PC-9 (cell line): ENCODE measurements at regions of chr12 and their contacts with region 1.

Region 1: DNA sequence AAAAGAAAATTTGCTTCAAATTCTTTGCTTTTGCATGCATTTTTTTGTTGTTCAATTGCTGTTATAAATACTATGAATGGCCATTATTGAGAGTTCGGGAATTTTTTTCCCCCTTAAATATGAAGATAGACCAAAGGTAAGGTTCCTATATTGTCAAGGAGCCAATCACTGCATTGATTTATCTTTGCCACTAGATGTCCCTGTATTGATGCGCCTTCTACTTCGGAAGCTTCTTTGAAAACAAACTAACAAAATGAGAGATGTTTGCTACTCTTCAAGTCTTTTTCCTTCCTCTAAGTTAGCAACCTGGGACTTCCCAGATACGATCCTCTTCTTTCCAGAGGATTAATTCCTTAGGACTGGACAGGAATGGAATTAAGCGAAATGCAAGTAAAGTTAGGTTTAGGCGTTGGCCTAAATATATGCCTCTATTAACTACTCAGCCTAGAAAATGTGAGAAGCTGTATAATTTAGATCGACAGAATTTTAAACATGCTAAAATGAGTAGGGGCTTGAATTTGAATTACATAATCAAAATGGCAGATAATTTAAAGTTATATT is 318.1 kb downstream of the AEBP2 start:
- DNase-seq: no peak
- H3K4me3 ChIP-seq: no peak overlapping the region
- H3K27ac ChIP-seq: no peak overlapping the region
- H3K4me1 ChIP-seq: no peaks in the 10 kb centered on the region
- H3K27me3 ChIP-seq: no peaks in the 10 kb centered on the region
- CTCF ChIP-seq: peak; percentile 62

Region 2: GRCh38 chr12:19893514-19893913 is 136.1 kb after region 1 on chr12:
- CTCF ChIA-PET with region 1: no interaction called
- POLR2A ChIA-PET with region 1: no interaction called
- intact Hi-C with region 1: loop called (anchors 5 kb)
- DNase-seq: no peak
- H3K4me3 ChIP-seq: no peak overlapping the region
- H3K27ac ChIP-seq: no peak overlapping the region
- H3K4me1 ChIP-seq: no peaks in the 10 kb centered on the region
- H3K27me3 ChIP-seq: no peaks in the 10 kb centered on the region
- CTCF ChIP-seq: no peak

Region 3: GRCh38 chr12:20212658-20213555 is 455.5 kb after region 1 on chr12:
- CTCF ChIA-PET with region 1: no interaction called
- POLR2A ChIA-PET with region 1: no interaction called
- intact Hi-C with region 1: loop called (anchors 5 kb)
- DNase-seq: peak; percentile 59 to 86
- H3K4me3 ChIP-seq: no peak overlapping the region
- H3K27ac ChIP-seq: no peak overlapping the region
- H3K4me1 ChIP-seq: no peaks in the 10 kb centered on the region
- H3K27me3 ChIP-seq: no peaks in the 10 kb centered on the region
- CTCF ChIP-seq: no peak

Region 4: GRCh38 chr12:20383612-20384011 is 626.2 kb after region 1 on chr12:
- CTCF ChIA-PET with region 1: no interaction called
- POLR2A ChIA-PET with region 1: no interaction called
- intact Hi-C with region 1: loop called (anchors 5 kb)
- DNase-seq: no peak
- H3K4me3 ChIP-seq: no peak overlapping the region
- H3K27ac ChIP-seq: no peak overlapping the region
- H3K4me1 ChIP-seq: no peaks in the 10 kb centered on the region
- H3K27me3 ChIP-seq: no peaks in the 10 kb centered on the region
- CTCF ChIP-seq: no peak

Region 5: DNA sequence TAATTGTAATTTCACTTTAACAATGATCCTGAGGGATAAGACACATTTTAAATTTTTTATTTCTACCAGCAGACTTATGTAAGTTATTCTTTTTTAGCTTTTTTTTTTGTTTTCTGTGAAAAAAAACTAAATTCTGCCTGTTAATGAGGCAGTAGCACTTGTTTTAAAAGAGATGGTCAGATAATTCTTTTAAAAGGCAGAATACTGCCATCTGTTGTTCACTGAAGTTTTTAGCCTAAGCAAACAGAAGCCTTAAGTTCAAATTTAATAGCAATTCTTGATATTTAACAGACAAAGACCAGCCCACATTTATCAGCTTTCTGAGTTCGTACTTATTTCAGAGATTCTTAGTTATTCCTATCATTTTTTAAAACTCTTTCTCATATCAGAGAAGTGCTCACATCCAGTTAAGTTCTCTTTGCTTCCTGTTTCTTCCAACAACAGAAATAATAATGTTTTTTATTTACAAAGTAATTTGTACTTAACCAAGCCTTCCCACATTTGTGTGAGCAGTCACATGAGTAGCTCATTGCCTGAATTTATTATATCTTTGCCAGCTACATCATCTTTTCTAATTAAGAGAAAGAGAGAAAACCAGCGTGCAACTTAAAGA is 844.4 kb after region 1 on chr12:
- CTCF ChIA-PET with region 1: no interaction called
- POLR2A ChIA-PET with region 1: no interaction called
- intact Hi-C with region 1: loop called (anchors 5 kb)
- DNase-seq: no peak
- H3K4me3 ChIP-seq: no peak overlapping the region
- H3K27ac ChIP-seq: no peak overlapping the region
- H3K4me1 ChIP-seq: no peaks in the 10 kb centered on the region
- H3K27me3 ChIP-seq: no peaks in the 10 kb centered on the region
- CTCF ChIP-seq: peak; percentile 60